ENCODE measurements at regions of chr17 and their contacts with region 1.

Region 1: DNA sequence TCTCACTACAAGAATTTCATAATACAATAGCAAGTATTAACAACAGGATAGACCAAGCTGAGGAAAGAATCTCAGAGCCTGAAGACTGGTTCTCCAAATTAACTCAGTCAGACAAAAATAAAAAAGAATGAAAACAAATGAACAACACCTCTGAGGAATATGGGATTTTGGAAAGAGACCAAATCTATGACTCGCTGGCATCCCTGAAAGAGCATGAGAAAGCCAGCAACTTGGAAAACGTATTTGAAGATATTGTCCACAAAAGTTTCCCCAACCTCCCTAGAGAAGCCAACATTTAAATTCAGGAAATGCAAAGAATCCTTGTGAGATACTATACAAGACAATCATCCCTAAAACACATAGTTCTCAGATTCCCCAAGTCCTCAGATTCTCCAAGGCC is 20.9 kb downstream of the NLRP1 start:
- DNase-seq: no peak
- ATAC-seq: no peak
- H3K4me3 ChIP-seq: no peak overlapping the region
- H3K27ac ChIP-seq: no peak overlapping the region
- H3K4me1 ChIP-seq: no peaks in the 10 kb centered on the region
- H3K27me3 ChIP-seq: no peaks in the 10 kb centered on the region

Region 2: GRCh38 chr17:5413682-5414081 is 149.8 kb before region 1 on chr17:
- intact Hi-C with region 1: no loop called
- DNase-seq: no peak
- ATAC-seq: peak in 1 of 2 donors; percentile 42
- H3K4me3 ChIP-seq: no peak overlapping the region
- H3K27ac ChIP-seq: no peak overlapping the region
- H3K4me1 ChIP-seq: no peaks in the 10 kb centered on the region
- H3K27me3 ChIP-seq: no peaks in the 10 kb centered on the region

Region 3: GRCh38 chr17:5500589-5501391 is 62.7 kb before region 1 on chr17:
- intact Hi-C with region 1: loop called in 1 of 4 experiments (anchors 10 kb)
- DNase-seq: peak; percentile 84 to 94 (median 93)
- ATAC-seq: peak; percentile 87 to 91
- H3K4me3 ChIP-seq: peak overlapping the region; percentile 64
- H3K27ac ChIP-seq: no peak overlapping the region
- H3K4me1 ChIP-seq: no peaks in the 10 kb centered on the region
- H3K27me3 ChIP-seq: no peaks in the 10 kb centered on the region